ENCODE measurements at regions of chr10 and their contacts with region 1.

Region 1: GRCh38 chr10:30783939-30784500 is 154.5 kb upstream of the LYZL2 start:
- DNase-seq: peak; percentile 96
- ATAC-seq: peak; percentile 93

Region 2: GRCh38 chr10:31808258-31809218 is 1024.5 kb after region 1 on chr10:
- intact Hi-C with region 1: loop called (anchors 2 kb)
- DNase-seq: peak; percentile 63
- ATAC-seq: peak; percentile 88